ENCODE measurements at regions of chr10 and their contacts with region 1.

Region 1: GRCh38 chr10:22573820-22574569 is 140.4 kb downstream of the PIP4K2A start:
- DNase-seq: peak; percentile 57
- ATAC-seq: peak; percentile 67
- H3K4me3 Mint-ChIP-seq: peak overlapping the region; percentile 41
- H3K27ac Mint-ChIP-seq: peak overlapping the region; percentile 84
- H3K4me1 Mint-ChIP-seq: peaks cover 55% of the 10 kb centered on the region
- H3K27me3 Mint-ChIP-seq: no peaks in the 10 kb centered on the region

Region 2: DNA sequence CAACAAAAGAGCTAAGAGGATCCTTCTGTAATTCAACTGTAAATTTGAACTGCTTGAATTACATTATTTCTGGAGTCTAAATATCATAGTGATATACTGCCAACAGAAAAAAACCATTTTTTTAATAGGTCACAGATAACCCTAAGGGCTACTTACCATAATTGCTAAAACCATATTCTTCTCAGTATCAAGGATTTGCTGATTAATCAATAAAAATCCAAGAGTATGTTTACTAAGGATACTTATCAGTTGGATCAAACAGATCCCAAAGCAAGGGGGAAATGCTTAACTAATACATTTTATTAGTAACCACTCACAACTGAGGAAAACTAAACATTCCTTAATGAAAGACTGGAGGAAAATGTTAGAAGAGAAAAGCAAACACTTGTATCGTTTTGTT is 25.7 kb before region 1 on chr10:
- CTCF ChIA-PET with region 1: interaction called, 10 read pairs
- DNase-seq: no peak
- ATAC-seq: no peak
- H3K4me3 Mint-ChIP-seq: no peak overlapping the region
- H3K27ac Mint-ChIP-seq: no peak overlapping the region
- H3K4me1 Mint-ChIP-seq: peaks cover 25% of the 10 kb centered on the region
- H3K27me3 Mint-ChIP-seq: no peaks in the 10 kb centered on the region

Region 3: GRCh38 chr10:22589851-22590514 is 16.0 kb after region 1 on chr10:
- CTCF ChIA-PET with region 1: interaction called, 52 read pairs
- DNase-seq: no peak
- ATAC-seq: no peak
- H3K4me3 Mint-ChIP-seq: no peak overlapping the region
- H3K27ac Mint-ChIP-seq: peak overlapping the region; percentile 28
- H3K4me1 Mint-ChIP-seq: peaks cover 14% of the 10 kb centered on the region
- H3K27me3 Mint-ChIP-seq: no peaks in the 10 kb centered on the region

Region 4: DNA sequence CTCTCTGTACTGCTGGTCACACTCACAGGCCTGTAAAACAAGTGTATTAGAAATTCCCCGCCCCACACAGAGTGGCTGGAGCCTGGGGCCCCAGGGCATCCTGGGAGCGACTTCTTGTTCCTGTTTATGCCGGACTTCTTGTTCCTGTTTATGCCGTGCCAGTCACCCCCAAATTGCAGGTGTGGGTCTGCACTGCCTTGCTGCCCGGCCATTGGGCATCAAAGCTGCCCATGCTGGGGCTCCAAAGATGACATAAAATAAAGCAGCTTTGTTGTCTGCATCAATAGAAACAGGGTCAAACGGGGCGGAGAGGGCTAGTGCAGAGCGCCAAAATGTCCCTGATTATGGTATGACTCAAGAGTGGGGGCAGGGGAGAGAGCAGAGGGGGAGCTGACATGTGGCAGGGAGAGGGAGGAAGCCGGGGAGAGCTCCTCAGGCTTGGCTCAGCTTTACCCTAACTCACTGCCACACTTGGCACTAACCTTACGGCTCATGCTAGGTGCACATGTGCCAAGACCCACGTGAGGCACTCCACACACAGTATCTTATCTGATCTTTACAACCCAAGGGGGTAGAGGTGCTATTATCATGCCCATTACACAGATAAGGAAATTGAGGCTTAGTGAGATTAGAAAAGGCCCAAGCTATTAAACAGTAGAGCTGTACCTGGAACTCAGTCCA is 42.0 kb after region 1 on chr10:
- CTCF ChIA-PET with region 1: interaction called, 19 read pairs
- DNase-seq: peak; percentile 73
- ATAC-seq: peak; percentile 59
- H3K4me3 Mint-ChIP-seq: peak overlapping the region; percentile 70
- H3K27ac Mint-ChIP-seq: peak overlapping the region; percentile 86
- H3K4me1 Mint-ChIP-seq: peaks cover 95% of the 10 kb centered on the region
- H3K27me3 Mint-ChIP-seq: no peaks in the 10 kb centered on the region

Region 5: DNA sequence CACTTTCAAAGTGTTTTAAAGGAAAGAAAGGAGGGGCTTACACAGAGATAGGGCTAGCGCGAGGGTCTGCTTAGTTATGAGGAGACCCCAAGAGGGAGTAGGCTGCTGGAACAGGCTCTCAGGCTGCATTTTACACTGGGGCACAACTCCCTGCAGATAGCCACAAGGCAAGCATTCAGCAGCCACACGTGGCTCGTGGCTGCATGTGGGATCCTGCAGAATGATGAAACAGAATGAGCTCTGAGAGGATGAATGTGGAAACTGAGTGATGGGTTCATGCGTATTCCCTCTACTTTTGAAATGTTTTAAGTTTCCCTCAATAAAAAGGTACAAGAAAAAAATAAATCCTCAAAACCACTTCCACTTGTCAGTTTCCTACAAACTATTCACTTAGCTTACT is 103.3 kb after region 1 on chr10:
- CTCF ChIA-PET with region 1: interaction called, 10 read pairs
- DNase-seq: no peak
- ATAC-seq: no peak
- H3K4me3 Mint-ChIP-seq: peak overlapping the region; percentile 23
- H3K27ac Mint-ChIP-seq: peak overlapping the region; percentile 79
- H3K4me1 Mint-ChIP-seq: peaks cover 85% of the 10 kb centered on the region
- H3K27me3 Mint-ChIP-seq: no peaks in the 10 kb centered on the region

Measured in activated CD8-positive, alpha-beta memory T cell treated with anti-CD3 and anti-CD28 coated beads, Interleukin-2, amount 10 ng/mL, durations not matched to agents 7 days and 5 days (primary cell).